ENCODE measurements at regions of chr1 and their contacts with region 1.

Region 1: DNA sequence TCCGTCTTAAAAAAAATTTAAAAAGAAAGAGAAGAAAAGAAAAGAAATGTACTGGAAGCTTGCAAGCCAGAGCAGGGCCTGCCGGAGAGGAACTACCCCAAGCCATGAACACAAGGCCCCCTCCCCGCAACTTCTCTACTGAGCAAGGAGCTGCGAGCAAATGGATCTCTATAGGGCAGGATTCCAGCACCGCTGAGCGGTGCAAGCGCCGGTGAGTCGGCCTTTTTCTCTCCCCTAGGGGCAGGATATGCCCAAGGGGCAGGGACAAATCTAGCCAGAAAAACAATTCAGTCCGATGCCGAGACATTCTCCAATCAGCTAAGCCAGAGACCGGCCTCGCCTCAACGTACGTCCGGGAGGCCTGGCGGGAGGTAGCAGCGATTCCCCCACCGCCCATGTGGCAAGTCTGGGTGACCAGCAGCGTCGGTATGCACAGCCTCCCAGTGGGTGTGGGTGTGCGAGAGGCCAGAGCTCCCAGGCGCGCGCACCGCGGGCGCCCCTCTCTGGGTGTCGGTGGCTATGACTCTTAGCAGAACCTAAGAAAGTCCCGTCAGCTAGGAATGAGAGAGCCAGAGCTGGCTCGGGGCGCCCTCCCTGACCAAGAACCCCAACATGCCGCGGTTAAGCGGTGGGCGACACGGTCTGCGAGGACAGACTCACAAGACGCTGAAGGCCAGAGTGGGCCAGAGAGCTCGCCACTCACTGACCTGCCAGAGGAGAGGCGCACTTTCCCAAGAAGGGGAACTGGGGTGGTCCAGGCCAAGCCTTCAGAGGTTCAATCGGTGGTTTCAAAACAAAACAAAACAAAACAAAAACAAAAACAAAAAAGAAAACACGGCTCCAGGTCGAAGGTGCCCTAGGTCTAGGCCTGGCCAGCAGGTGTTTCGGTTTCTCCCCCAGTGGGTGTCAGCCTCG is 1.9 kb downstream of the CSMD2 start:
- DNase-seq: peak; percentile 75
- H3K4me3 ChIP-seq: peak overlapping the region; percentile 63
- CTCF ChIP-seq: peak; percentile 93

Region 2: DNA sequence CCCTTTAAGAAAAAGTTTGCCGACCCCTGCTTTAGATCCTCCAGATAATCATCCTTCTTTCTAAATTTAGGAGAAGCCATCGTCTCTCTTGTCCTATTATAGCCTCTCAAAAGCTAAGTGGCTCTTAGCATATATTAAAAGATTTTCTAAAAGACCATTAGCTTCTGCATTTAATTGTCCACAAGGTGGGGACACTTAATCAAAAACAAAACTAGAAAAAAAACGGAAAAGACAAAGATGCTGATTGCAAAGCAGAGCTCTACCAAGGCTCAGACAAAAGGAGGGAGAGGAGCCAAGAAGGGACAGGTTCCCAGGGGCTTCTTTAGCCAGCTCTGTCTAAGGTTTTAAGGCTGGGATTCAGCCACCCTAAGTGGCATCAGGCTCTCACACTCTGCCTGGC is 427.5 kb before region 1 on chr1:
- in situ Hi-C with region 1: loop called (anchors 25 kb)
- DNase-seq: no peak
- H3K4me3 ChIP-seq: no peak overlapping the region
- CTCF ChIP-seq: peak; percentile 39

Region 3: GRCh38 chr1:34122080-34122932 is 40.8 kb before region 1 on chr1:
- in situ Hi-C with region 1: loop called (anchors 5 kb)
- DNase-seq: no peak
- H3K4me3 ChIP-seq: no peak overlapping the region
- CTCF ChIP-seq: no peak

Region 4: GRCh38 chr1:34378968-34379856 is 216.1 kb after region 1 on chr1:
- in situ Hi-C with region 1: no loop called
- DNase-seq: no peak
- H3K4me3 ChIP-seq: no peak overlapping the region
- CTCF ChIP-seq: no peak